Dendritic cell treated with granulocyte-macrophage colony-stimulating factor and Interleukin-4, amounts not matched to agents 40 ng/mL and 50 ng/mL, for 4 days (primary cell): ENCODE measurements at regions of chr16 and their contacts with region 1.

Region 1: DNA sequence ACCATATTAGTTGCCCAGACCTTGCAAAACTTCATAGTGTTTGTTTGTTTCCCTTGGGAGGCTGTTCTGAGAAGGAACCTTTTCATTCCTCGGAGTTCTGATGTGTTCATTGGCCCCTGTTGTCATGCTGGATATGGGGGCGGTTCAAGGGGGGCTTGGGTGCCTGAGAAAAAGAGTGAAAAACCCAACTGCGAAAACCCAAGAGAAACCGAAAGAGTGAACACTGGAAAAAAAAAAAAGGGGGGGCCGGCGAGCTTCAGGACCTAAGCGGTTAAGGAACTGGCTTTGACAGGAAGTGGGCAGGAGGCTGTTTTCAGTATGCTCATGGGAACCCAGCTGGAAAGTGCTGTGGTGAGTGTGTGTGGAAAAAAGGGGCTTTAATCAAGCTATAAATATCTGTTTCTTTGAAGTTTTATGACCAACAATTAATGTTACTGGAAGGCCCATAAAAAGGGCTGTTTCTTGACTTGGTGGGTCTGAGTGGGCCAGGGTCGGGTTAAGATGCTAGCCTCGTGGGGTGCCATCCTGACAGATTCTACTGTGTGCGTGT is 510.7 kb downstream of the MAF start:
- H3K4me3 Mint-ChIP-seq: peak overlapping the region; percentile 73
- H3K27ac Mint-ChIP-seq: peak overlapping the region; percentile 61
- H3K4me1 Mint-ChIP-seq: peaks cover 40% of the 10 kb centered on the region
- H3K27me3 Mint-ChIP-seq: peaks cover 19% of the 10 kb centered on the region

Region 2: GRCh38 chr16:79008036-79008868 is 81.6 kb before region 1 on chr16:
- intact Hi-C with region 1: no loop called
- H3K4me3 Mint-ChIP-seq: no peak overlapping the region
- H3K27ac Mint-ChIP-seq: no peak overlapping the region
- H3K4me1 Mint-ChIP-seq: peaks cover 32% of the 10 kb centered on the region
- H3K27me3 Mint-ChIP-seq: peaks cover 4% of the 10 kb centered on the region

Region 3: DNA sequence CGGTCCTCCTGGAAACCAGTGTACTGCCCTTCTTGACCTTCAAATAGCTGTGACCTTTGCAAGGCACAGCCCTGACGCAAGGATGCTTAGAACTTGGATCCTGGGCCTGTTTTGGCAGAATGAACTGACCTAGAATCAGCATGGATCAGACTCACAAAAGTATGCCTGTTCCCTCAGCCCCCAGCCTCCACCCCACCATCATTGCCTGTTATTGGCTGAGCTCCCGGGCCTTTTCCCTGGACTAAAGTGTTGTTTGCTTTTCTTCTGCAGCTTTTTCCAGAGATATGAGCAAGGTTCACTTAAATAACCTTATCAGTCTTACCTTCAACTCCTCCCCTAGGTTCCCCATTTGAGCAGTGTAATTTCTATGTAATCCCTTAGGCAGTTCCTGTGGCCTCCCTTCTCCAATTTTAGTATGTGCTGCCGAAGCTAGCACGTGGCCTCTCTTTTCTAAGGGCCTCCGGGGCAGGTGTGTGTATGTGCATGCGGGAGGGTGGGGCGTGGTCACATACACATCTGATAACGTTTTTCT is 163.4 kb after region 1 on chr16:
- intact Hi-C with region 1: loop called (anchors 10 kb)
- H3K4me3 Mint-ChIP-seq: no peak overlapping the region
- H3K27ac Mint-ChIP-seq: no peak overlapping the region
- H3K4me1 Mint-ChIP-seq: peaks cover 9% of the 10 kb centered on the region
- H3K27me3 Mint-ChIP-seq: peaks cover 12% of the 10 kb centered on the region

Region 4: DNA sequence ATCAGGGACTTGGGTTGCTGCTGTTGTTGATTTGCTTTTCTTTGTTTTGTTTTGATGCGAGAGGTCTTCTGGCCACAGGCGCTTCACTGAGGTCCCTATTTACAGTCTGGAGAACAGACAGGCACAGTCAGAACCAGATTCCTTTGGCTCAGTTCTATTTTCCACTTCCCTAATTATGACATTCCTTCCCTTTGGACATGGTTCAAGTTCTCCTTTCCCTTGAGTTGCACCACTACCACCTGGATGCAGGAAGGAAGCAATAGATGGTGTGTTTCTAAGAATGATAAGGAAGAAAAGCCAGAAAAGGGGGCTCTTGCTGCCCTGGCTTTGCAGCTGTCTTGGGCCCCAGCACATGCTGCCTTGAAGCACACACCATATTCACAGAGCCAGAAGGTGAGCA is 350.1 kb after region 1 on chr16:
- intact Hi-C with region 1: loop called (anchors 10 kb)
- H3K4me3 Mint-ChIP-seq: peak overlapping the region; percentile 50
- H3K27ac Mint-ChIP-seq: peak overlapping the region; percentile 82
- H3K4me1 Mint-ChIP-seq: peaks cover 65% of the 10 kb centered on the region
- H3K27me3 Mint-ChIP-seq: peaks cover 19% of the 10 kb centered on the region